ENCODE measurements at regions of chr3 and their contacts with region 1.

Region 1: DNA sequence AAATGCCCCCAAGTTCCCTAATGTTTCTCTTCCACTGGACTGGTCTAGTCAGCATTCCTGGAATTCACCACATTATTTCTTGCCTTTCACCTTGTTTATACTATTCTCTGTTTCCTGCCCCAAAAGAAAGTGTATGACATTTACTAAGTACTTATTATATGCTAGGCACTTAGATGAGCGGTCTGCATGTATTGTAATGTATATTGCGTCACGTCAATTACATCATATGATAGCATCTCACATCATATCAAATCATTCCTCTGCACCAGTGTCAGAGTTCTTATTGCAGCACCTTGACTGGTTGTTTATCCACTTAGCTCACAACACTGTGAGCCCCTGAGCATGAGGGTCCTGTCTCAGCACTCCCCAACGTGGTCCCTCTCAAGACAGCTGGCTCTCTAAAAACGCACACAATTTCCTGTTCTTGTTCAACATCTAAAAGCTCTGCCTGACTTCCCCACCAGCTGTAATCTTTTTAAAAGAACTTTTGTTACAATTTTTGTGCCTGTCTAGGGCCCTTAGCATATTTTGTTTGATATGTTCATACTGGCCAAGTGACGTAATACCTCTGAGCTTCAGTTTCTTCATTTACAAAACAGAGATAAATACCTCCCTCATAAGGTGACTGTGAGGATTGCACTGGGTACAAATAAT is 58.8 kb downstream of the ARHGAP31 start:
- DNase-seq: no peak
- H3K4me3 ChIP-seq: no peak overlapping the region
- H3K27ac ChIP-seq: peak overlapping the region; percentile 7 to 47; a peak in 3 of 4 replicates
- H3K4me1 ChIP-seq: peaks cover 9 to 28% of the 10 kb centered on the region in 2 experiments; a peak in 3 of 4 replicates
- H3K27me3 ChIP-seq: no peaks in the 10 kb centered on the region
- CTCF ChIP-seq: peak; percentile 47
- EP300 ChIP-seq: no peak
- RAD21 ChIP-seq: peak; percentile 66

Region 2: GRCh38 chr3:119331661-119332060 is 21.3 kb before region 1 on chr3:
- CTCF ChIA-PET with region 1: interaction called, 14 read pairs
- POLR2A ChIA-PET with region 1: interaction called, 3 read pairs
- DNase-seq: no peak
- H3K4me3 ChIP-seq: no peak overlapping the region
- H3K27ac ChIP-seq: peak overlapping the region; percentile 28 to 95; a peak in 2 of 4 replicates
- H3K4me1 ChIP-seq: peaks cover 4 to 50% of the 10 kb centered on the region in 2 experiments; a peak in 2 of 4 replicates
- H3K27me3 ChIP-seq: no peaks in the 10 kb centered on the region
- CTCF ChIP-seq: no peak
- EP300 ChIP-seq: no peak
- RAD21 ChIP-seq: no peak

Region 3: GRCh38 chr3:119338754-119339153 is 14.2 kb before region 1 on chr3:
- CTCF ChIA-PET with region 1: interaction called, 16 read pairs
- POLR2A ChIA-PET with region 1: no interaction called
- DNase-seq: no peak
- H3K4me3 ChIP-seq: no peak overlapping the region
- H3K27ac ChIP-seq: peak overlapping the region in 1 of 2 experiments; percentile 3; a peak in 1 of 4 replicates
- H3K4me1 ChIP-seq: peaks cover 0 to 23% of the 10 kb centered on the region in 2 experiments; a peak in 2 of 4 replicates
- H3K27me3 ChIP-seq: no peaks in the 10 kb centered on the region
- CTCF ChIP-seq: no peak
- EP300 ChIP-seq: no peak
- RAD21 ChIP-seq: no peak

Measured in SK-N-SH (cell line).